RWPE1 (cell line): ENCODE measurements at regions of chr5 and their contacts with region 1.

Region 1: GRCh38 chr5:149510136-149510535 is 41.1 kb downstream of the CSNK1A1 start:
- DNase-seq: no peak
- H3K27ac ChIP-seq: peak overlapping the region; percentile 14; the same call in 1 of the 2 replicates
- CTCF ChIP-seq: no peak

Region 2: GRCh38 chr5:149125386-149125891 is 384.7 kb before region 1 on chr5:
- CTCF ChIA-PET with region 1: no interaction called
- POLR2A ChIA-PET with region 1: no interaction called
- DNase-seq: peak; percentile 67
- H3K27ac ChIP-seq: no peak overlapping the region
- CTCF ChIP-seq: no peak

Region 3: GRCh38 chr5:149497357-149497756 is 12.8 kb before region 1 on chr5:
- CTCF ChIA-PET with region 1: interaction called, 11 read pairs
- POLR2A ChIA-PET with region 1: no interaction called
- DNase-seq: no peak
- H3K27ac ChIP-seq: peak overlapping the region; percentile 60
- CTCF ChIP-seq: no peak